Colonic mucosa (tissue), 4 donors: ENCODE measurements at regions of chr19 and their contacts with region 1.

Region 1: GRCh38 chr19:4870025-4870700 is 2.7 kb upstream of the PLIN3 start:
- DNase-seq: peak; percentile 60
- H3K4me3 ChIP-seq: no peak overlapping the region
- H3K27ac ChIP-seq: peak overlapping the region; percentile 39
- H3K4me1 ChIP-seq: peaks cover 7% of the 10 kb centered on the region
- H3K27me3 ChIP-seq: no peaks in the 10 kb centered on the region
- CTCF ChIP-seq: no peak

Region 2: DNA sequence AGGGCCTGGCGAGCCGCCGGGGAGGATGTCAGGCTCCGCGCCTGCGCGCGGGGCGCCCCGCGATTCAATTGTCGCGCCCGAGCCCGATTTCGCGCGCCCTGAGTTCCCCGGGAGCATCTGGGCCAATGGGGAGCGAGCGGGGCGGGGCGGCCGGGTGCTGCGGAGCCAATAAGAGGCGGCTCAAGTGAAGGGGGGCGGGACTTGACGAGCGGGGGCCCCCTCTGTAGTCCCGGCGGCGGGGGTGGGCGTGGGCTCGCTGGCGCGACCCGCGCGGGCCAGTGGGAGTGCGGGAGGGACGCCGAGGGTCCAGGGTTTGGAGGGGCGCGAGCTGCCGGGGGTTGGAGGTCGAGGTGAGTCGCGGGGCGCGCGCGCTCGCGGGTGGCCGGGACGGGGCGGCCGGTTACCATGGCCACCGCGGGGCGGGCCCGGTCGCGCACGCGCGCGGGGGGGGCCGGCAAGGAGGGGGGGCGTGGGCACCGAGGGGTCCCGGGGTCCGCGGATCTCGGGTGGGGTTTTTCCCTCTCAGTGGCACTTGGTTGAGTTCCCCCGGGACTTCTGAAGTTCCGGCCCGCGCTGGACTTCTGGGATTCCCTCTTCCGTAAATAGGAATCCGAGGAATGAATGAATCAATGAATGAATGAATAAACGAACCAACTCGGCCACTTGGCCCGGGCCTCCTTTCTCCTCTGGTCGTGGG is 39.9 kb after region 1 on chr19:
- intact Hi-C with region 1: loop called (anchors 2 kb)
- DNase-seq: peak; percentile 93
- H3K4me3 ChIP-seq: peak overlapping the region; percentile 80
- H3K27ac ChIP-seq: no peak overlapping the region
- H3K4me1 ChIP-seq: peaks cover 12% of the 10 kb centered on the region
- H3K27me3 ChIP-seq: no peaks in the 10 kb centered on the region
- CTCF ChIP-seq: no peak

Region 3: GRCh38 chr19:4968462-4969291 is 98.5 kb after region 1 on chr19 and contains the start of gene KDM4B:
- intact Hi-C with region 1: loop called (anchors 5 kb)
- DNase-seq: peak; percentile 99
- H3K4me3 ChIP-seq: peak within 1 kb of the TSS; percentile 59
- H3K27ac ChIP-seq: peak within 1 kb of the TSS; percentile 7
- H3K4me1 ChIP-seq: peaks cover 11% of the 10 kb centered on the region
- H3K27me3 ChIP-seq: no peaks in the 10 kb centered on the region
- CTCF ChIP-seq: no peak
- total RNA-seq, gene KDM4B: 35.2 to 52.9 TPM